Testis (tissue), 5 donors: ENCODE measurements at regions of chr1 and their contacts with region 1.

Region 1: DNA sequence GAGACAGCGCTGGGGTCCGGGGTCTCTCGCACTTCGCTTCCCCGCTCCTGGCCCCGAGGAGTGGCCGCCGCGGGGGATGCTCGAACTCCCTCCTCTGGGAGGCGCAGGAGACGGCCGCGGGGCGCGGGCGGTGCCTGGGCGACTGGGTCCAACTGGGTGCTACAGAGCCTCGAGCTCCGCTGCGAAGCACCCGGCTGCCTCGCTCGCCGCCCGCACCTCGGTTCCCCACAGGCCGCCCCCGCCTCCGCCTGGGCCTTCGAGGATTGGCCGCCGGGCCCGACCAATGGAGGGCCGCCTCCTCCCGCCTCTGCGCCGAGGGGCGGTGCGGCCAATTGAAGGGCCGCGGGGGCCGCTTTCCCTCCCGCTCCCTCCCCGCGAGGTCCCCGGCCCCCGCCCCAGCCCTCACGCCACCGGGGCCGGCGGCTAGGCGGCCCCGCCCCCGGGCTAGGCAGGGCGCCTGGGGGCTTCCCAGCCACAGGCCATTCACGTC is at the start of gene CNN3:
- DNase-seq: peak; percentile 89
- H3K4me3 ChIP-seq: peak within 1 kb of the TSS; percentile 65 to 74
- H3K27ac ChIP-seq: peak within 1 kb of the TSS; percentile 92 to 95
- H3K4me1 ChIP-seq: peaks cover 11% of the 10 kb centered on the region
- H3K27me3 ChIP-seq: no peaks in the 10 kb centered on the region
- CTCF ChIP-seq: no peak
- POLR2A ChIP-seq: peak; percentile 83
- total RNA-seq, gene CNN3: 45.9 to 61.4 TPM

Region 2: GRCh38 chr1:94863919-94864318 is 63.0 kb before region 1 on chr1:
- intact Hi-C with region 1: loop called (anchors 5 kb)
- DNase-seq: peak; percentile 60
- H3K4me3 ChIP-seq: no peak overlapping the region
- H3K27ac ChIP-seq: peak overlapping the region; percentile 75 to 87
- H3K4me1 ChIP-seq: peaks cover 25% of the 10 kb centered on the region
- H3K27me3 ChIP-seq: no peaks in the 10 kb centered on the region
- CTCF ChIP-seq: no peak
- POLR2A ChIP-seq: no peak

Region 3: GRCh38 chr1:95035536-95035935 is 108.6 kb after region 1 on chr1:
- intact Hi-C with region 1: loop called (anchors 10 kb)
- DNase-seq: no peak
- H3K4me3 ChIP-seq: no peak overlapping the region
- H3K27ac ChIP-seq: no peak overlapping the region
- H3K4me1 ChIP-seq: no peaks in the 10 kb centered on the region
- H3K27me3 ChIP-seq: no peaks in the 10 kb centered on the region
- CTCF ChIP-seq: no peak
- POLR2A ChIP-seq: no peak